Naive thymus-derived CD8-positive, alpha-beta T cell (primary cell): ENCODE measurements at regions of chr1 and their contacts with region 1.

Region 1: DNA sequence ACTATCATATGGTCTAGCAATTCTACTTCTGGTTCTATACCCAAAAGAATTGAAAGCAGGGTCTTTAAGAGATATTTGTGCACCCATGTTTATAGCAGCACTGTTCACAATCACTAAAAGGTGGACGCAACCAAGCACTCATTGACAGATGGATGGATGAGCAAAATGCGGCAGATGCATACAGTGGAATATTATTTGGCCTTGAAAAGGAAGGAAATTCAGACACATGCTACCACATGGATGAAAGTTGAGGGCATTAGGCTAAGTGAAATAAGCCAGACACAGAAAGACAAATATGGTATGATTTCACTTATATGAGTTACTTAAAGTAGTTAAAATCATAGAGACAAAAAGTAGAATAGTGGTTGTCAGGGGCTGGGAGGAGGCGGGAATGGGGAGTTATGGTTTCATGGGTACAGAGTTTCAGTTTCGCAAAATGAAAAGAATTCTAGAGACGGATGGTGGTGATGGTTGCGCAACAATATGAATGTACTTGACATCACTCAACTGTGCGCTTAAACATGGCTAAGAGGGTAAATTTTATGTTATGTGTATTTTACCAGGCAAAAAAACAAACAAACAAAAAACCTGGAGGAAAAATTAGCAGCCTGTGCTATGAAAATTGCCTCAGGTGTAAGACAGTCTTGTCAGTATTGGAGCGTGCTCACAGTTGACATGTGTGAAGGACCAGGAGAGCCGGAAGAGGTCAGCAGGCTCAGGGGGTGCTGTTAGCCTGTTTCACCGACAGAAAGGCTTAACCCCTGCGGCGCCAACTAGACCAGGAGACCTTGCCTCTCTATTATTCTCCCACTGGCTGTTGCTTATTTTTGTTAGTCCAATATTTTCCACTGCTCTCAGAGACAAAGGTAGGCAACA is 26.5 kb downstream of the CD247 start:
- DNase-seq: peak in 2 of 10 donors; percentile 40 to 54
- ATAC-seq: peak; percentile 14 to 25
- H3K4me3 Mint-ChIP-seq: peak overlapping the region; percentile 58 to 89 (median 78)
- H3K27ac Mint-ChIP-seq: peak overlapping the region; percentile 88 to 97 (median 96)
- H3K4me1 Mint-ChIP-seq: peaks cover 50 to 97% (median 97%) of the 10 kb centered on the region in 4 donors
- H3K27me3 Mint-ChIP-seq: peaks cover 0 to 5% (median 0%) of the 10 kb centered on the region in 5 donors

Region 2: DNA sequence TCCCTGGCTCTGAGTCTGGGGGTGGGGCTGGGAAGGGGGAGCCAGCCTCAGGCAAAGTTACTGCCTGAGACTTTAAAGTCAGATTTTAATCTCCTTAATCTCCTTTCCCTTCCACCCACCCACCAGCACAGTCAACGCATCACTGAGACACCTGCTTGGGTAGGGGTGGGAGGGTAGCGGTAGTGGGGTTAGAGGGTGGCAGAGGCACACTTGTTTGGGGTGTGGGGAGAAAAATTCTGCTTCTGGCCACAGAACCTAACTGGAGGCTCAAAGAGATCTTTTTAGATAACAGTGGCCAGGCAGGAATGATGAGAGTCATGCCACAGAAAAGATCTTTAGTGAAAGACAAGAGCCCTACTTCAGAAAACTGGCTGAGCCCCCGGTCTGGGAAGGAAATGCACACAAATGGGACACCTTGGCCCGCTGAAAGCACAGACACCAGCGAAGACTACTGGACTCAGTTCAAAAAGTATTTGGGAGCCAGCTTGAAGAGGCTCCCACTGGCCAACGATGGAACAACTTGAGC is 17.6 kb before region 1 on chr1:
- POLR2A ChIA-PET with region 1: interaction called, 13 read pairs
- DNase-seq: peak in 8 of 10 donors; percentile 37 to 71 (median 58)
- ATAC-seq: peak; percentile 82 to 83
- H3K4me3 Mint-ChIP-seq: peak overlapping the region; percentile 70 to 91 (median 82)
- H3K27ac Mint-ChIP-seq: peak overlapping the region; percentile 70 to 95 (median 88)
- H3K4me1 Mint-ChIP-seq: peaks cover 42 to 92% (median 86%) of the 10 kb centered on the region in 4 donors
- H3K27me3 Mint-ChIP-seq: no peaks in the 10 kb centered on the region